Activated naive CD4-positive, alpha-beta T cell treated with anti-CD3 and anti-CD28 coated beads, Interleukin-2, amount 10 ng/mL, durations not matched to agents 7 days and 5 days (primary cell): ENCODE measurements at regions of chr6 and their contacts with region 1.

Region 1: DNA sequence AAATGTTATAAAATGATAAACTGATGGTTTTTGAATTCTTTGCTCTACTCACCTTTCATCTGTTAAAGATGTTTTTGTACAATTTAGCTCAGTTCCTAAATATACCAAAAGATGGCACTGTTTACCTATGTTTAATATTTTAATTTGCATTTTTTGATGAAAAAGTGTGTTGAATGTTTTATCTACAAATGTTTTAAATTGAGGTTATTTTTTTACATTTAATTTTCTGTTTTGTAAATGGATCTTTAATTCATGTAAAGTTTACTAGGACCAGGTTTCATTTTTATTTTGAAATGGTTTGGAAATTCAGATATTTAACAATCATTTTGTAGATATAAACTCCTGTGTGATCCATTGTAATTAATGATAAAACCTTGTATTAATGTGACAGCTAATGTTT is 30.0 kb downstream of the CDKAL1 start:
- DNase-seq: no peak
- H3K4me3 Mint-ChIP-seq: no peak overlapping the region
- H3K27ac Mint-ChIP-seq: no peak overlapping the region
- H3K4me1 Mint-ChIP-seq: peaks cover 14% of the 10 kb centered on the region
- H3K27me3 Mint-ChIP-seq: no peaks in the 10 kb centered on the region

Region 2: DNA sequence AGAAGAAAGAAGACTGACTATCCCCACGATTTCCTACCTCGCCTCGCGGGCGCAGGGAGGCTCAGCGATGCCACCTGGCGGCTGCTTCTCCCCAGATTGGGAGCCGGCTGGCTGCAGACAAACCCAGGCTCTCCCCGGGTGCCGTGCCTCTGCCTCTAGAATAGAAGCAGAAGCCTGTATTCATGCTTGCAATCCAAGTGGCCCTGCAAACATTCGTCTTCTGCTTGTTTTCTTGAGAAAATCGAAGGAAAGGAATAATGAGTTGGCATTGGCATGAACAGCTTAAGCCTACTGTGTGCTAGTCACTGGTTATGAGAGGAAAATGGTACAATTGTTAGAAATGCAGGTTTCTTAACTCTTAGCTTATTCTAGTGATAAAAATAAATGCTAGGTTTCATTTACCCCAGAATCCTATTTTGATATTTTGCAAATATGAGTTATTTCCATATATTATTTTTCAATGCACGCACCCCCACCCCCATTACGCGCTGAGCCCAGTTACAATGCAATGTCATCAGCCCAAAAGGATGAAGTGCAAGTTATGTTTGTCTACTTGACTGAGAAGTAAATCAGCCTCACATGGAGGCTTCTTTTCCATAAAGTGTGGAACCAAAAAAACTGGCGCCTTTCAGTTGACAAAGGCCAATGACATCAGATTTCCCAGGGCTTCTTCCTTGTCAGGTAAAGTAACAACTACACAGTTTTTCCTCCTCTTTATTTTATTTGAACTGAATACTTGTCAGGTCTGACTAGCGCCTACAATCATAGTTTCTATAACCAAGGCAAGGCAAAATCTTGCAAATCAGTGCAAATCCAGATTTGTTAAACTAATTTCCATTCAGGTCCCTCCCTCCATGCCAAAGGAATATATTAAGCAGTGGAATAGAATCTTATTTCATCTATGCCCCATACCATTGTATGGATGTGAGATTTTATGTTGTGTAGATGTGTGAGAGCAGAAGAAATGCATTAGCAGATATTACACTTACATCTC is 1025.4 kb after region 1 on chr6:
- CTCF ChIA-PET with region 1: interaction called, 49 read pairs
- DNase-seq: peak; percentile 83
- H3K4me3 Mint-ChIP-seq: peak overlapping the region; percentile 86
- H3K27ac Mint-ChIP-seq: no peak overlapping the region
- H3K4me1 Mint-ChIP-seq: peaks cover 15% of the 10 kb centered on the region
- H3K27me3 Mint-ChIP-seq: peaks cover 37% of the 10 kb centered on the region